Sigmoid colon (tissue), 7 donors: ENCODE measurements at regions of chr18 and their contacts with region 1.

Region 1: DNA sequence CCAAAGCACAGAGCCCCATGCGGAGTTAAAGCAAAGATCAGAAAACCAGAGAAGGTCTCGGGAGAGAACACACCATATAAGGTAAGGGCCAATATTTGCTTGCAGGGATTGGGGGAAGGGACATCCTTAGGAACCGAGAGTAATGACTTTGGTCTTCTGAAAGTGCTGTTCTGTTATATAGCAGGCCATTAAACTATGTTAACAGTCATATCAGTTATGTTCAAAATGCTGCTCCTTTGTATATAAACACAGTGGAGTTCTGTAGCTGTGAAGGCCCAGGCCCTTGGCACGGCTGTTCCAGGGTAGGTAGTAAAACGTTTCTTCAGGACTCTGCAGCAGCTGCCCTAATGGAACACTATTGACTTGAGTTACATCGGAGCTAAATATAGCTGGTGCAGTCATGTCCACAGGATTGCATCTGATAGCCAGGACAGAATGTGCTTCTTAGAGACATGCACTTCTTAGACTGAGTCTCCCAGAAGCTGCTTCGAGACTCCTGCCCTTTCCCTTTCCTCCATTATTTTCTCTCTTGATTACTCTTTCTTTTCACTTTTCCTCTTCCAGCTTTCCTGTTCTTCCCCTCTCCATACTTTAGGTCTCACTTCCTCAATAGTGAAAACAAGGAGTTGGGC is 122.4 kb downstream of the SETBP1 start:
- DNase-seq: peak; percentile 97
- H3K4me3 ChIP-seq: no peak overlapping the region
- H3K27ac ChIP-seq: peak overlapping the region; percentile 87 to 90 (median 88)
- H3K4me1 ChIP-seq: peaks cover 3 to 87% (median 72%) of the 10 kb centered on the region in 4 donors
- H3K27me3 ChIP-seq: no peaks in the 10 kb centered on the region
- CTCF ChIP-seq: no peak
- EP300 ChIP-seq: peak; percentile 92 to 99 (median 96)
- POLR2A ChIP-seq: peak; percentile 14 to 27

Region 2: DNA sequence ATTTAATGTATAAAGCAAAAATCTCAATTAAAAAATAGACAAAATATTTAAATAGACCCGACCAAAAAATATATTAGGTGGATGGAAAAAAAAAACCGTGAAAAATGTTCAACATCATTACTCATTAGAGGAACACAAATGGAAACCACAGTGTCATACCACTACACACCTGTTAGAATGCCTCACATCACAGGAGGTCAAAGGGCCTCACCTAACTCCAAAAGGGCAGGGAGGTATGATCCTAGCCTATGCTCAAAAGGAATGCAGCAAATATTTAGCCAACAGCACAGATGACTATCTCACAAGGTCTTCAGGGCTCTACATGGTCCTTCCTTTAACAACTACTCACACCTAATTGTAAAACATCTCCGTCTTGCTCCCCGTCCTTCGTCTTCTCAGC is 308.0 kb before region 1 on chr18:
- intact Hi-C with region 1: loop called (anchors 10 kb)
- DNase-seq: no peak
- H3K4me3 ChIP-seq: no peak overlapping the region
- H3K27ac ChIP-seq: no peak overlapping the region
- H3K4me1 ChIP-seq: peaks cover 0 to 33% (median 25%) of the 10 kb centered on the region in 4 donors
- H3K27me3 ChIP-seq: no peaks in the 10 kb centered on the region
- CTCF ChIP-seq: no peak
- EP300 ChIP-seq: no peak
- POLR2A ChIP-seq: no peak

Region 3: DNA sequence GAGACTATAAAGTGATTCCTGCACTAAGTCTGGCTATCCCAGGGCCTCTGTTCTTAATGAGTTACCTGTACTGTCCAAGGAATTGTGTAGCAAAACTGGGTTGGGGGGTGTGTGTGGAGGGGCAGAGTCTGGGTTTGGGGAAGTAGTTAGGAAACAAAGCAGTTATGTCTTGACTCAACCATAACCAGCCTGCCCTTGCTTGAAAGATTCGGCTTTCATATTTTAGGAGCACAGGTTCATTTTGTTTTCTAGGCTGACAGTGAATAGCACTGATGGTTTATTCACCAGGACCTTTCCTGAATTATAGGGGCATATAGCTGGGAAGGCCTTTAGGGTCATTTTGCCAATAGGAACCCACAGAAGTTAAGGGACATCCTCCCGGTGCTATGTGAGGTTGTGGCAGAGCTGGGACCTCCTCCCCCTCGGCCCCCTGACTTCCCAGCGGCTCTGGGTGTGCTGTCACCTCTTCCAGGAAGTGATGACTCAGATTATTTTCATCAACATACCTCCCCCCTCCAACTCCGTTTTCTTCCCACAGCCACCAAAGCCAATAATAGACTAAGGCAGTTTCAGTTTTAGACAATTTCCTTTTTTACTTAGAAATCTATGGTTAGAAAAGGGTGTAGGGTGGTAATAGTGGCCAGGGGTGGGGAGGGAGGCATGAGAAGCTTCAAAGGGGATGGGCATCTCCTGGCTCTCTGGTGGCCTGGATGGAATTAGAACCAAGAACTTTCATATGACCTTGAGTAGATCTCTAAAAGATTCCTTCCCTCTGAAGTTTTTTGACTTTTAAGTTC is 77.6 kb before region 1 on chr18:
- intact Hi-C with region 1: loop called (anchors 2 kb)
- DNase-seq: peak; percentile 76
- H3K4me3 ChIP-seq: no peak overlapping the region
- H3K27ac ChIP-seq: peak overlapping the region; percentile 64 to 82 (median 74)
- H3K4me1 ChIP-seq: peaks cover 0 to 91% (median 83%) of the 10 kb centered on the region in 4 donors
- H3K27me3 ChIP-seq: no peaks in the 10 kb centered on the region
- CTCF ChIP-seq: no peak
- EP300 ChIP-seq: peak in 1 of 4 donors; percentile 37
- POLR2A ChIP-seq: no peak

Region 4: DNA sequence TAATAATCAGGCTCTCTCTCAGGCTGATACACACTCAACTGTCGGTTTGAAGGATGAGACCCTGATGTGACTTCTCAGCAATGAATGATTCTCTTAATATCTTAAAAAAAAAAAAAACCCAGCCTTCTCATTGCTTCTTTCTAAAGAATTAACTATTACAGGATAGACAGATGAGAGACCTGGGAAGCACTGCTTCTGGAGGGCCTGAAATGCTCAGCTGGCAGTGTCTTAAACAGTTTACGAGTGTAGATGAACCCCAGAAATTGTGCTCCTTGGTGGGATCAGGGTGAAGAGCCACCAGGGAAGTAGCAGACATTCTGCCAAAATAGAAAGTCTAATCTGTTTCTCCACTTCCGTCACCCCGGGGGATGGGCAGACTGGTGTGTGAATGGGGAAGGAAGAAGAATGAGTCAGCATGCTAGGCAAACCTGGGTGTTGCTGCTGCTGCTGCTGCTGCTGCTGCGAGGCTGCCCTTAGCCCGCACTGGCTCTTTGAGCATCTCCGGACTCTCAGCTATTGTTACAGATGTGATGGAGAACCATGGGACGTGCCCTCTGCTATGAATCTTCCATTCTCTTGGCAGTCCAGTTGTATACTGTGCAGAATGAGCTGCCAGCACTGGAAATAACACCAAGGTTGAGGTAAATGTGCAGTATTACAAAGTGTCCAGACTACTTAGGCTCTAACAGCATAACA is 36.0 kb after region 1 on chr18:
- intact Hi-C with region 1: loop called (anchors 5 kb)
- DNase-seq: peak; percentile 87
- H3K4me3 ChIP-seq: no peak overlapping the region
- H3K27ac ChIP-seq: peak overlapping the region; percentile 30 to 73 (median 58)
- H3K4me1 ChIP-seq: peaks cover 4 to 84% (median 76%) of the 10 kb centered on the region in 4 donors
- H3K27me3 ChIP-seq: no peaks in the 10 kb centered on the region
- CTCF ChIP-seq: no peak
- EP300 ChIP-seq: no peak
- POLR2A ChIP-seq: no peak

Region 5: GRCh38 chr18:44852818-44853217 is 49.7 kb after region 1 on chr18:
- intact Hi-C with region 1: no loop called
- DNase-seq: no peak
- H3K4me3 ChIP-seq: no peak overlapping the region
- H3K27ac ChIP-seq: no peak overlapping the region
- H3K4me1 ChIP-seq: peaks cover 0 to 53% (median 28%) of the 10 kb centered on the region in 4 donors
- H3K27me3 ChIP-seq: no peaks in the 10 kb centered on the region
- CTCF ChIP-seq: no peak
- EP300 ChIP-seq: no peak
- POLR2A ChIP-seq: no peak

Region 6: GRCh38 chr18:45026162-45026561 is 223.0 kb after region 1 on chr18:
- intact Hi-C with region 1: no loop called
- DNase-seq: no peak
- H3K4me3 ChIP-seq: no peak overlapping the region
- H3K27ac ChIP-seq: no peak overlapping the region
- H3K4me1 ChIP-seq: peaks cover 0 to 14% (median 11%) of the 10 kb centered on the region in 4 donors
- H3K27me3 ChIP-seq: no peaks in the 10 kb centered on the region
- CTCF ChIP-seq: no peak
- EP300 ChIP-seq: no peak
- POLR2A ChIP-seq: no peak

Region 7: DNA sequence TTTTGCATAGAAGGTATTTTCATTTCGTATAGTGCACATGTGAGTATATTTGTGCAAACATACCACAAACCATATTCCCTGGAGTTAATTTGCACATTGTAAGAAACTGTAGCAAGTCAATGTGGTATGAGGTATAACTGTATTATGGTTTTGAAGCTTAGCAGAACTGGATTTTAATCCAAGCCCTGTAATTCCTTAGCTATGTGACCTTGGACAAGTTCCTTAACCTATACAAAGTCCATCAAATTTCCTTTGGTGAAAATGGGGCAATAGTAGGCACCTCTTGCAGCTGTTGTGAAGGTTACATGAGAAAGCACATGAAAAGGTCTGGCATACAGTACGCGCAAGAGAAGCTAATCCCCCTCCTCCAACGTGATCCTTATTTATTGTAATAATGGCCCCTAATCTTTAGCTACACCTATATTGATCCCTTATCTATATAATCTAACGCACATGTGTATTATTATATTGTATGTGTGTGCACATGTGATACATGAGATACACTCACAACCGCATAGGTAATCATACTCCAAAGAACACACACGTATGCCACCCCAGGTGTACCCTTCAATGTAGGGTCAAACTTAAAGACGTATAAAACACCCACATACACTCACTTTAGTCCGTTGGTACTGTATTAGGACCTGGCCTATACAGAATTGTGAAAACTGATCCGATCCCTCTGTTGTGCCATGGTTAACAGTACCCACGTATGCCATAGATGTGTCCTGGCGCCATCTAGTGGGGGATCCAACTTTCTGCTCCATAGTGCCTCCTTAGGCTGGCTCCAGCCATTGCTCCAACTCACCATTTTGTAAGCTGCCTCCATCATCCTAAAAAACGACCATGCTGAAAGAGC is 409.3 kb after region 1 on chr18:
- intact Hi-C with region 1: loop called (anchors 10 kb)
- DNase-seq: peak; percentile 90
- H3K4me3 ChIP-seq: no peak overlapping the region
- H3K27ac ChIP-seq: no peak overlapping the region
- H3K4me1 ChIP-seq: peaks cover 0 to 6% (median 2%) of the 10 kb centered on the region in 4 donors
- H3K27me3 ChIP-seq: no peaks in the 10 kb centered on the region
- CTCF ChIP-seq: peak; percentile 89 to 96 (median 92)
- EP300 ChIP-seq: no peak
- POLR2A ChIP-seq: no peak